Activated T-helper 1 cell treated with anti-CD3 and anti-CD28 coated beads, Interleukin-12 subunit alpha, Interleukin-12 subunit beta, Interleukin-2, Interleukin-4 antibody, amounts not matched to agents 30 ng/mL and 10 ng/mL and 1 ng/mL, durations not matched to agents 14 hours and 24 hours and 36 hours (primary cell): ENCODE measurements at regions of chr3 and their contacts with region 1.

Region 1: GRCh38 chr3:50568947-50569749 is at the start of gene HEMK1:
- DNase-seq: peak; percentile 92
- H3K4me3 Mint-ChIP-seq: peak within 1 kb of the TSS; percentile 97
- H3K27ac Mint-ChIP-seq: peak within 1 kb of the TSS; percentile 97
- H3K4me1 Mint-ChIP-seq: peaks cover 78% of the 10 kb centered on the region
- H3K27me3 Mint-ChIP-seq: no peaks in the 10 kb centered on the region
- total RNA-seq, gene HEMK1: 54.1 and 58.0 TPM in 2 replicates

Region 2: DNA sequence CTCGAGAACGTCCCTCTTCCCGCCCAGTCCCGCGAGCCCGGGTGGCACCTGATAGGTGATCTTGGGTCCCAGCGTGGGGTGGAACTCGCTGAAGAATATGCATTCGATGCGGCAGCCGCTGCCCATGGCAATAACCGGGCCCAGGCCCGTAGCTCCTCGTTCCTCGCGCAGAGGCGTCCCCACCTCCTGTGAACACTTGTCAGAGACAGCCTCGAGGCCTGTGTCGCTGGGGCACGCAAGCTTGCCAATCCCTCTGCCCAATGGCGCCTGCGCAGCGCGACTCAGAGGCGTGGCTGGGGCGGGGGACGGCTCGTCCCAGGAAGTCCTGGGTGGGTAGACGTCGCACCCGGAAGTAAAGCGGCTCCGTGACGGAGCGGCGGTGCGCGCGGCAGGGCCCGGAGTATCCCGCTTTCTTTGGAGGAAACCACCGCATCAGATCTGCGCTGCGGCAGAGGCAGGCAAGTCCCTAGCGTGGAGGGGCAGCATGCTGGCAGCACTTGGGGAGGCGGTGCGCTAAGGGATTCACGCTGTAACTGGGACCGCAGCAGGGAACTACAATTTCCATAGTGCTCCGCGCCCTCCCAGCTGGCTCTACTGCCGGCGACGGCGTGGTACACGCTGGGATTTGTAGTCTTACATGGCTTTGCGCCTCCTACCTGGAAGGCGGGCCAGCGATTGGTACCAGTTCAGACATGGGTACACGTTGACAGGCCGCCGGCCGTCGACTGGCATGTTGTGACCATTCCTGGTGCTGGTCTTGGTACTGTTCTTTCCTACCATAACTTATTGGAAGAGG is 218.4 kb before region 1 on chr3 and contains the starts of genes CYB561D2 and NPRL2:
- intact Hi-C with region 1: loop called (anchors 1 kb)
- DNase-seq: peak; percentile 100
- H3K4me3 Mint-ChIP-seq: peak within 1 kb of the TSS; percentile 95
- H3K27ac Mint-ChIP-seq: peak within 1 kb of the TSS; percentile 95
- H3K4me1 Mint-ChIP-seq: peaks cover 55% of the 10 kb centered on the region
- H3K27me3 Mint-ChIP-seq: no peaks in the 10 kb centered on the region
- total RNA-seq, gene CYB561D2: 30.0 and 35.9 TPM in 2 replicates
- total RNA-seq, gene NPRL2: 43.7 and 46.6 TPM in 2 replicates

Region 3: DNA sequence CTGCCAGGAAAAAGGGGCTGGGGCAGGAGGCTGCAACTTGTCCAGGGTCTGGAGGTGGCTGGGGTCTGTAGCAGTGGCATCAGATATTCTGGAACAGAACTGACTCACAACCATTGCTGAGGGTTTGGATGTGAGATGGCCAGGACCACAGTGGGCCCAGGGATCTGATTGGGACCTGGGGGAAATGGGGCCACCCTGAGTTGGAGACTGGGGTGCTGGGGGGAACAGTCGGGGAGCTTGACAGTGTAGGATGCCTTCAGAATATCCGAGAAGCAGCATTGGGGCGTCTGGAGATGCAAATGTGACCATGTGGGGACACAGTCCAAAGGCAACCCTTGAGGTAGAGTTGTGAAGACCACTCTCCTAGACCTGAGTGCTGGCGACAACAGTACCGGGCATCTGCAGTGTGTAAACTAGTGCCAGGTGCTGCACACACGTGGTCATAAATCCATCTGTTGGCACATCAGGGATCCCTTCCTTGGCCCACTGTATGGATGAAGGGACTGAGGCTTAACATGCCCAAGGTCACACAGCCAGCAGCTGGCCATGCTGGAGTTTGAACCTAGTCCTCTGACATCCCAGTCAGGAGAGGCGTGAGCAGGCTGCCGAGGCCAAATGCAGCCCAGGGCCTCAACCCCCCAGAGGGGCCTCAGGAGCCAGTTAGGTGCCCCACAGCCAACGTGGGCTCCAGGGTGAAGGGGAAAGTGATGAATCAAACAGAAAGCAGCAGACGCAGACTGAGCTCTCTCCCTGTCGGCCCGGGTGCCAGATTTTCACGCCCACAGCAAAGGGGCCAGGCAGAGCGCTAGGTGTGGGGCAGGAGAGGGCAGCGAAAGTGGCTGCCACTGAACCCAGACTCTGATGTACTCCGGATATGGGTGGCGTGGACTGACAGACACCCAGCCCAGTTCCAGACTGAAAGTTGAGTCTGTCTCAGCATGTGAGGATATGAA is 18.9 kb after region 1 on chr3:
- intact Hi-C with region 1: loop called (anchors 1 kb)
- DNase-seq: peak; percentile 67
- H3K4me3 Mint-ChIP-seq: peak overlapping the region; percentile 58
- H3K27ac Mint-ChIP-seq: peak overlapping the region; percentile 88
- H3K4me1 Mint-ChIP-seq: peaks cover 87% of the 10 kb centered on the region
- H3K27me3 Mint-ChIP-seq: no peaks in the 10 kb centered on the region

Region 4: DNA sequence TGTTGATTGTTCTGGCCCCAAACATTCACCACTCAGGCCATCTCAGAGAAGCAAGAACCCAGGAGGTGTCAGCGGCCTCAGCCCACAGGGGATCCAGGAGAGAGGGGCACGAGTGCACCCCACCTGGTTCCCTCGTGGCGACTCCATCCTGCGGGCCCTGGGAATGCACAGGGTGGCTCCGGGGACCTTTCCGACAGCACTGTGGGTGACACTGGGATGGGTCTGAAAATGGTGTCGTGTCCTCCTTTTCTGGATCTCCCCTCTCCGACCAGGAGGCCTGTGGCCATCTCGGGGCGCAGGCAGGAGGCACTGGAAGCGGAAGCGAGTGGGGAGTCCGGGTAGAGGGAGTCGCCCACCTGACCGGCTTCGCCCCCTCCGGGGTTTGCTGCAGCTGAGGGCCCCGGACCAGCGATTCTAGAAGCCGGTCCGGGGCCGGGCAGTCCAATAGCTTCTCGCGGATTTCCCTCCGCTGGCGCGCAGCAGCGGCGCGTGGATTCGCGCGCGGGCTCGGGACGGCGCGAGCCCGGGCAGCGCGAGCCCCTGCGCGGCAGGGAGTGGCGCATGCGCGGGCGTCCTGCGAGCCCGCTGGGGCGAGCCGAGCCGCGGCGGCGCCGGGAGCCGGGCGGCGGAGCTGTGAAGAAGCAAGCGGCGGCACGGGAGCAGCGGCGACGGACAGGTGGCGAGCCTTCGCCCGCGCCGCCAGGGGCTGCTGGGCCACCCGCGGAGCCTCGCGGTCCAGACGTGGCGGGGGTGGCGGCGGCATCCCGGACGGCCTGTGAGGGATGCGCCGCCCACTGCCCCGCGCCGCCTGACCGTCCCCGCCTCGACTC is 105.4 kb after region 1 on chr3 and contains the start of gene DOCK3:
- intact Hi-C with region 1: loop called (anchors 2 kb)
- DNase-seq: peak; percentile 59
- H3K4me3 Mint-ChIP-seq: peak within 1 kb of the TSS; percentile 80
- H3K27ac Mint-ChIP-seq: peak within 1 kb of the TSS; percentile 31
- H3K4me1 Mint-ChIP-seq: peaks cover 17% of the 10 kb centered on the region
- H3K27me3 Mint-ChIP-seq: peaks cover 63% of the 10 kb centered on the region
- total RNA-seq, gene DOCK3: 1.5 and 1.6 TPM in 2 replicates

Region 5: GRCh38 chr3:51384726-51385473 is 815.8 kb after region 1 on chr3 and contains the start of gene MANF:
- intact Hi-C with region 1: loop called (anchors 1 kb)
- DNase-seq: peak; percentile 98
- H3K4me3 Mint-ChIP-seq: peak within 1 kb of the TSS; percentile 99
- H3K27ac Mint-ChIP-seq: peak within 1 kb of the TSS; percentile 98
- H3K4me1 Mint-ChIP-seq: peaks cover 54% of the 10 kb centered on the region
- H3K27me3 Mint-ChIP-seq: no peaks in the 10 kb centered on the region
- total RNA-seq, gene MANF: 200 and 208 TPM in 2 replicates

Region 6: GRCh38 chr3:51670823-51671733 is 1101.9 kb after region 1 on chr3 and contains the start of gene TEX264:
- intact Hi-C with region 1: loop called (anchors 1 kb)
- DNase-seq: peak; percentile 95
- H3K4me3 Mint-ChIP-seq: peak within 1 kb of the TSS; percentile 86
- H3K27ac Mint-ChIP-seq: peak within 1 kb of the TSS; percentile 87
- H3K4me1 Mint-ChIP-seq: peaks cover 65% of the 10 kb centered on the region
- H3K27me3 Mint-ChIP-seq: no peaks in the 10 kb centered on the region
- total RNA-seq, gene TEX264: 50.3 and 52.0 TPM in 2 replicates